ENCODE measurements at regions of chr14 and their contacts with region 1.

Region 1: GRCh38 chr14:94001501-94002396 is 4.6 kb downstream of the CCDC197 start:
- DNase-seq: peak; percentile 61
- ATAC-seq: peak; percentile 80

Region 2: DNA sequence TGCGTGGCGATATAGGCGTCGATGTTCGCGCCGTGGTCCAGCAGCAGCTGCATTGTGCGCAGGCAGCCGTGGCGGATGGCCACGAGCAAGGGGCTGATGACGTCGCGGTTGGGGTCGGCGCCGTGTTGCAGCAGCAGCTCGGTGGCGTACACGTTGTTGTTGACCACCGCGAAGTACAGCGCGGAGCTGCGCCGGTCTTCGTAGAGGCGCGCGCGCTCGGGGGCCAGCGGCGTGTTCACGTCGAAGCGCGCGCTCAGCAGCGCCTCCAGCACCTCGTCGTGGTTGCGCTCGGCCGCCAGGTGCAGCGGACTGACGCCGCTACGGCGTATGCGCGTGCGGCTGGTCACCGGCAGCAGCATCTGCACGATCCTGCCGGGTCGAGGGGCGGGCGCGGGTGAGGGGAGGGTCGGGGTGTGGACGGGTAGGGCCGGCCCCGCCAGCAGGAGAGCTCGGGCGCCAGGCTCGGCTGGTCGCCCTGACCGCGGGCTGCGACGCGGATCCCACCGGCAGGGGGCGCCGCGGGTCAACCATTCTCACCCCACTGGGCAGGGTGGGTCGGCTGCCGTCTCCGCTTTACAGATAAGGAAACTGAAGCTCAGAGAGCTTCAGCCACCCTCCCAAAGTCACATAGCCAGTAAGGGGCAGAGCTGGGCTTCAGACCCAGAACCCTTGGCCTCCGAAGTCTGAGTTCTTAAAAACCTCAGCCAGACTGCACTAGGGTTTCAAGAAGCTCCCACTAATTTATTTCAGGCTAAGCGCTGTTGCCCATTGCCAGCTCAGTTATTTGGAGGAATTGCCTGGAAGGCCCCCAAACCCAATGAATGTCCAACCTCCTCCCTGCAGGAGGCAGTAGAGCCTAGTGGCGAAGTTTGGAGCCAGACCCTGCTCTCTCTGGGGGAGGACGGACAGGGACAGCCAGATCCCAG is 62.2 kb before region 1 on chr14:
- intact Hi-C with region 1: loop called (anchors 10 kb)
- DNase-seq: peak; percentile 89
- ATAC-seq: peak; percentile 71

Measured in left ventricle myocardium superior (tissue), 1 donor.